ENCODE measurements at regions of chr1 and their contacts with region 1.

Region 1: GRCh38 chr1:10209905-10210810 is at the start of gene KIF1B:
- DNase-seq: peak; percentile 99
- ATAC-seq: peak; percentile 99
- total RNA-seq, gene KIF1B: 70.0 TPM

Region 2: DNA sequence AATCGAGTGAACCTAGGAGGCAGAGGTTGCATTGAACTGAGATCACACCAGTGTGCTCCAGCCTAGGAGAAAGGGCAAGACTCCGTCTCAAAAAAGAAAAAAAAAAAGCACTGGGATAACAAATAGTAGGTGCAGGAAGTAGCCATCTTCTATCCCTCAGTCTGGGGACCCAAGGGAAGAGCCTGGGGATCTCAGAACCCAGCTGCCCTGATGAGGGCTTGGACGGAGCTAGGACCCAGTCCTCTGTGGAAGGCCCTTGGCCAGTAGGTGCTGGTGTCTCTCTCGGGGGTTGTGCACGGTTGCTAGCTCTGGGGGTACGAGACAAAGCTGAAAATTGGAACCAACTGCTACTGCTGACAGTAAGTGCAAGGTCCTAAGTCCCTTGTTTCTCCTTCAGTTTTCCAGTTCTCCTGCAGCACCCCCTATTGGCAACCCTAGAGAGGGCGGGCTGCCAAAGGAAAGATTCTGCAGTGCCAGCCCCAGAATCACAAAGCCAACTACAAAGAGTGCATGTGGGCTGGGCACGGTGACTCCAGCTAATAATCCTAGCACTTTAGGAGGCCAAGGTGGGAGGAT is 57.4 kb before region 1 on chr1:
- intact Hi-C with region 1: loop called (anchors 2 kb)
- DNase-seq: peak; percentile 75
- ATAC-seq: no peak

Region 3: DNA sequence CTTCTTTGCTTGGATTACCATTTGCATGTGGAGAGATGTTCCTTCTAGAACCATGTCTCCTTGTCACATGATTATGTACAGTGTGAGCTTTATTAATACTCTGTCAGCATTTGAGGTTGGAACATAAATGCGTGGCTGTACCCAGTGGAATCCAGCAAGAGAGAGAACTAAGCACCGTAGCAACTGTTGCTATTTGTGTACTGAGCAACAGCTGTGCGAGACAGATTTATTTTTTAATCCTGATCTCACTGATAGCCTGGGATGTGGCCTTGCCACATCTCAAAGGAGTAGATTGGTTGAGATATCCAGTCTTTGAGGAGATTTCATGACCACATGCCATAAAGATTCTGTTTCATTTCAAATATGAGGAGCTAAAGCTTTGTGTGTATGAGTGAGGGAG is 43.6 kb after region 1 on chr1:
- intact Hi-C with region 1: loop called (anchors 5 kb)
- DNase-seq: no peak
- ATAC-seq: peak; percentile 95

Region 4: DNA sequence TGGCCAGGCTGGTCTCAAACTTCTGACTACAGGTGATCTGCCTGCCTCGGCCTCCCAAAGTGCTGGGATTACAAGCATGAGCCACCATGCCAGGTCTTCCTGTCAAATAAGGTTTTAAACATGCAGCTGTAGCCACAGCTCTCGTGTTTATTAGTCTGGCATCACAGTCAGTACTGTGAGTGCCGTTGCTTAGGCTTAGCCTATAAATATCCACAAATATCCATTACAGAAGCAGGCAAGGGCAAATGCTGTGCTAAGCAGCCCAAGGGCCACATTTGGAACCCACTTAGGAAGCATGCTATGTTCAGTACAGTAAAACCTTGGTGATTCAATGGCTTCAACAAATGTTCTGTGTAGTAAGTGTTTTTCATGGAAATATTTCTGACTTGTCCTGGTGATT is 76.1 kb after region 1 on chr1:
- intact Hi-C with region 1: loop called (anchors 2 kb)
- DNase-seq: no peak
- ATAC-seq: peak; percentile 95

Region 5: GRCh38 chr1:10338047-10338446 is 127.9 kb after region 1 on chr1:
- intact Hi-C with region 1: loop called (anchors 1 kb)
- DNase-seq: no peak
- ATAC-seq: peak; percentile 88

Region 6: GRCh38 chr1:10430216-10431069 is 220.3 kb after region 1 on chr1 and contains the start of gene CENPS:
- intact Hi-C with region 1: loop called (anchors 2 kb)
- DNase-seq: peak; percentile 96
- ATAC-seq: peak; percentile 97
- total RNA-seq, gene CENPS: 7.6 TPM